Natural killer cell (primary cell): ENCODE measurements at regions of chr1 and their contacts with region 1.

Region 1: DNA sequence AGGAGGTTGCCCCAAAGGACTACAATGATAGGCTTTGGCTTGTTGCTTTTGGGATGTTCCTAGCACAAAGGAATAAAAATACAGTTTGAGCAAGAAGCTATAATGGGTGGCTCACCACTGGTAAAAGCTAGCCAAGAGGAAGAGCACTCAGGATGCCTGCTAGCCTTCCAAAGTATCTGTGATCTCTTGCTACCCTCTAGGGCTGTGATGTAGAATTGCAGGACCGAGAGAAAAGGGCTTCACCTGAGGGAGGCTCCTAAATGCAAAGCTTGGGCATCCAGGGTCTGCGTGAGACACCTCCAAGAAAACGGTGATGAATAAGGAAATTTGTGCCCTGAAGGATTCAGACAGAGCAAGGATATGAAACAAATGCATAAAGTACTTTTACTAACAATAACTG is 17.7 kb downstream of the IVL start:
- DNase-seq: peak in 1 of 2 donors; percentile 6
- ATAC-seq: peak in 1 of 3 donors; percentile 47
- H3K4me3 ChIP-seq: no peak overlapping the region
- H3K4me3 Mint-ChIP-seq: no peak overlapping the region
- H3K27ac ChIP-seq: no peak overlapping the region
- H3K27ac Mint-ChIP-seq: no peak overlapping the region
- H3K4me1 ChIP-seq: no peaks in the 10 kb centered on the region
- H3K4me1 Mint-ChIP-seq: no peaks in the 10 kb centered on the region
- H3K27me3 ChIP-seq: no peaks in the 10 kb centered on the region
- H3K27me3 Mint-ChIP-seq: peaks cover 8 to 26% of the 10 kb centered on the region in 2 donors
- CTCF ChIP-seq: no peak

Region 2: GRCh38 chr1:152870831-152871645 is 55.1 kb before region 1 on chr1:
- intact Hi-C with region 1: loop called (anchors 1 kb)
- DNase-seq: no peak
- ATAC-seq: no peak
- H3K4me3 ChIP-seq: no peak overlapping the region
- H3K4me3 Mint-ChIP-seq: no peak overlapping the region
- H3K27ac ChIP-seq: no peak overlapping the region
- H3K27ac Mint-ChIP-seq: no peak overlapping the region
- H3K4me1 ChIP-seq: no peaks in the 10 kb centered on the region
- H3K4me1 Mint-ChIP-seq: no peaks in the 10 kb centered on the region
- H3K27me3 ChIP-seq: no peaks in the 10 kb centered on the region
- H3K27me3 Mint-ChIP-seq: peaks cover 8 to 19% of the 10 kb centered on the region in 2 donors
- CTCF ChIP-seq: no peak

Region 3: DNA sequence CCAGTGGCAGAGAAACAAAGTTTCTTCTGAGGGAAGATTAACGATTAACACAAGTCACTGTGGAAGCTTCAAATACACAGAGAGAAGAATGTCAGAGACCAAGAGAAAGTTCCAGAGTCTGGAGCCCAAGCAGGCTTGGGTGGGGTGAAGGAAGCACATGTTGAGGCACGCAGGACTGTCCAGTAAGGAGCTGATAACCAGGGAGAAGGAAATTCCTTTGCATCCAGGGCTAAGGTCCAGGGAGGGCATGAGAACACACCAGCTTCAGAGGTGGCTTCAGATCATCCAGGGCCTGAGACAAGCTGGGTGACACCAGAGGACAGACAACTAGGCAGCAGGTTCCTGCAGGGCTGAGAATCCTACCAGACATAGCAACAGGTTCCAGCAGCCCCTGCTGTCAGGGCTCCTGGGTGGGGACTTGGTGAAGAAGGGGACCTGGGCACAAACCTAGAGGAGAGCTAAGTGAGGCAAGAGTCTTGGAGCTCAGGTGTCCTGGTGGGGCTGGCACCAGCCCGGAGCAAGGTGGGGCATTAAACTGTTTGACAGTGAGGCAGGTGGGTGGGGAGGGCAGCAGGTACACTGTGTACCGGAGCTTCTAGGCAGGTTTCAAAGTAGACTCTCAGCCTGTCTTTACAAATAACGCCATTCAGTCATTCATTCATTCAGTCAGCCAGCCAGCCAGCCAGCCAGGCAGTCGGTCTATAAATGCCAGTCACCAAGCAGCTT is 55.2 kb after region 1 on chr1:
- intact Hi-C with region 1: no loop called
- DNase-seq: no peak
- ATAC-seq: no peak
- H3K4me3 ChIP-seq: no peak overlapping the region
- H3K4me3 Mint-ChIP-seq: no peak overlapping the region
- H3K27ac ChIP-seq: no peak overlapping the region
- H3K27ac Mint-ChIP-seq: no peak overlapping the region
- H3K4me1 ChIP-seq: no peaks in the 10 kb centered on the region
- H3K4me1 Mint-ChIP-seq: no peaks in the 10 kb centered on the region
- H3K27me3 ChIP-seq: no peaks in the 10 kb centered on the region
- H3K27me3 Mint-ChIP-seq: peaks cover 15 to 34% of the 10 kb centered on the region in 2 donors
- CTCF ChIP-seq: no peak